ENCODE measurements at regions of chr4 and their contacts with region 1.

Region 1: DNA sequence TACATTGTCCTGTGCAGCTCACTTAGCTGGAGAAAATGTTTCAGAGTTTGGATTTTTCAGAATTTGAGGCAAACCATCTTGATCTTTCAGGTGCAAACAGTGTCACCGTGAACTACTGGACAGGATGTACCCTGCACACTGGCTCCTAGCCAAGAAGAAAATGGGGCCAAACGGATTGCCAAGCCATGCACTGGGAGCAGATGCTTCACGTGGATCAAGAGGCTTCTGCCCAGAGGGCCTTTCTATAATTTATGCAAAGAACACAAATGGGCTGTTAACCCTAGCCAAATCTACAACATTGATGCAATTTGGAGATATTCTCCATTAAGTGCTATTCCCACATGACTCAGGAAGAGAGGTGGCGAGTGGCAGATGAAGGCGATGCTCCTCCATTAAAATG is 46.9 kb upstream of the ATP8A1 start:
- DNase-seq: no peak
- H3K4me3 ChIP-seq: no peak overlapping the region
- H3K27ac ChIP-seq: no peak overlapping the region
- H3K4me1 ChIP-seq: no peaks in the 10 kb centered on the region
- H3K27me3 ChIP-seq: no peaks in the 10 kb centered on the region
- CTCF ChIP-seq: no peak
- EP300 ChIP-seq: no peak
- POLR2A ChIP-seq: no peak

Region 2: DNA sequence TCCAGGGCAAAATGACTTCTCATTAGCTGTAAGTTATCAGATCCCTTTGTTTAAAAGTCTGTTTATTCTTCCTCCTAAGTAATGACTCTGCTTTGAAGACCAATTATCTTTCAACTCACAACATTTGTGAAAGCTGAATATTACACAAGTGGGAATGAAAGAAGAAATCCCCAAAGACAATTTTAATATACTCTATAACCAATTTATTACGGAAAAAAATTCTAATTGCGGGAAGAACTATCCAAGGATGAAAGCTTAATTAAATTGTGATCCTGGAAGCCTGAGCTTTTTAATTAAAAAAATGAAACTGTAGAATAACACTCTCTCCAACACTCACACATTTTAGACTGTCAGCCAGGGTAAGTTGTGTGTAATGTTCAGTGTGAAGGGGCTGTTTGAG is 322.1 kb before region 1 on chr4:
- in situ Hi-C with region 1: no loop called
- intact Hi-C with region 1: no loop called
- DNase-seq: no peak
- H3K4me3 ChIP-seq: no peak overlapping the region
- H3K27ac ChIP-seq: no peak overlapping the region
- H3K4me1 ChIP-seq: no peaks in the 10 kb centered on the region
- H3K27me3 ChIP-seq: peaks cover 6% of the 10 kb centered on the region
- CTCF ChIP-seq: no peak
- EP300 ChIP-seq: no peak
- POLR2A ChIP-seq: no peak

Region 3: DNA sequence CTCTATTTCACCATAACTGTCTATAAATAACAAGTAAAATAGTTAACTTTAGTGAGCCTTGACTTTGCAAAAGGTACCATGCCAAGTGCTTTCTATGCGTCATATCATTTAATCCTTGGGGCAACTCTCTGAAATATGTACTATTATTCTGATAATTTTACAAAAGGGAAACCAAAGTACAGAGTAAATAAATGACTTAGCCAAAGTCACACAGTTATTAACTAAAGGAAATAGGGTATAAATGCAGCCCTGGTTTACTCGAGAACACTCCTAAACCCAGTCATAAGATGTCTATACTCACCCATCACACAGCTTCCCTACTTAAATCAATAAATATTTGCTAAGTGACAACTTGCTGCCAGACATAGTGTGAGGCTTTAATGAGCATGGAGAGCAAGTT is 1730.4 kb after region 1 on chr4:
- in situ Hi-C with region 1: no loop called
- intact Hi-C with region 1: loop called (anchors 5 kb)
- DNase-seq: no peak
- H3K4me3 ChIP-seq: no peak overlapping the region
- H3K27ac ChIP-seq: no peak overlapping the region
- H3K4me1 ChIP-seq: no peaks in the 10 kb centered on the region
- H3K27me3 ChIP-seq: no peaks in the 10 kb centered on the region
- CTCF ChIP-seq: no peak
- EP300 ChIP-seq: no peak
- POLR2A ChIP-seq: no peak

Measured in transverse colon (tissue), 4 donors.